Activated CD4-positive, alpha-beta T cell treated with anti-CD3 and anti-CD28 coated beads, Interleukin-2, amount 10 ng/mL, durations not matched to agents 24 days and 14 days (primary cell): ENCODE measurements at regions of chr11 and their contacts with region 1.

Region 1: DNA sequence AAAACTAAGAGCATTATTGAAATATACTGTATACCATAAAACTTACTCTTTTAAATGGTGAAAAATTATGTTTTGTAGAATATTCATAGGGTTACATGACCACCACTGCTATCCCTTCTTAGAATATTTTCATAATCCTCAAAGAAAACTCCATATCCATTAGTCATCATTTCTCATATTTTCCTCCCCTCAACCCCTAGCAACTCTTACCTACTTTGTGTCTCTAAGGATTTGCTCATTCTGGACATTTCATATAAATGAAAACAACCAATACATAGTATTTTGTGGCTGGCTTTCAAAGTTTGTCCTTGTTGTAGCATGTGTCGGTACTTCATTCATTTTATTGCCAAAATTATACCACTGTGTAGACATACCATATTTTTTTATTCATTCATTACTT is 863.8 kb downstream of the KCNA4 start:
- DNase-seq: no peak
- H3K4me3 Mint-ChIP-seq: no peak overlapping the region
- H3K27ac Mint-ChIP-seq: no peak overlapping the region
- H3K4me1 Mint-ChIP-seq: no peaks in the 10 kb centered on the region
- H3K27me3 Mint-ChIP-seq: no peaks in the 10 kb centered on the region

Region 2: GRCh38 chr11:29914203-29914930 is 761.3 kb after region 1 on chr11:
- intact Hi-C with region 1: loop called (anchors 5 kb)
- DNase-seq: no peak
- H3K4me3 Mint-ChIP-seq: no peak overlapping the region
- H3K27ac Mint-ChIP-seq: no peak overlapping the region
- H3K4me1 Mint-ChIP-seq: no peaks in the 10 kb centered on the region
- H3K27me3 Mint-ChIP-seq: no peaks in the 10 kb centered on the region